Mucosa of descending colon (tissue), 3 donors: ENCODE measurements at regions of chr11 and their contacts with region 1.

Region 1: GRCh38 chr11:4636962-4637661 is at the start of gene OR51D1:
- DNase-seq: peak; percentile 54 to 77 (median 75)
- ATAC-seq: peak; percentile 95
- H3K4me3 ChIP-seq: no peak within 1 kb of the TSS
- H3K4me1 ChIP-seq: no peaks in the 10 kb centered on the region
- CTCF ChIP-seq: peak; percentile 77
- total RNA-seq, gene OR51D1: not detected

Region 2: DNA sequence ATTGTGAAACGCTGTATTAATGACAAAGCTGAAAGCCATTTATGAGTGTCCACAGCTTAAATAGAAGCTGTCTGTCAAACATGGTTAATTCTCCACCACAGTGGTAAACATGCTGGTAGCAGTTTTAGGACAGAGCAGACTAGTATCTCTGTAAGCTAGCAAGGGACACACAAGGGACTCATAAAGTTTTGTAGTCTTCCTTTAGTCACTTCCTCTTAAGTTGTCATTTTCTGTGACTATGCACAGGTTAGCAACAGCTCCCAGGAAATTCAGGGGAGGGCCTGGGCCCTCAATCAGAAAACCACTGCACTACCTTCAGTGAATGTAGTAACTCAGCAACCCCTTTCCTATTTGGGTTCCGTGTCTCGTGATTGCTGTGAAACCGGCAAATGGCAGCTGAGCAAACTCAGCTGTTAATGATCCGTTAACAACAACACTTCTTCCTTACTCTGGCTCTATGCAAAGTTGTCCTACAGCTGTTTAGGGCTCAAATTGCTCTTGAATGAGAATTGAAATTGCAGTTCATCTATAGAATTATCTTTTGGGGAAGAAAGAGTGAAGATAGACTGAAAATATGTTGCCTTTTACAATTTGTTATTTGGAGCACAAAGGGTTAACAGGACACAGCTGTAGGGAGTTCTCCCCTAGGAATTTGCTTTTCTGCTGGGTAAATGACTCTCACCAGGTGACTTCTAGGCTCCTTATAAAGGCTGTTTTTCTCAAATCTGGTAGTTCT is 67.1 kb after region 1 on chr11 and contains the start of gene MMP26:
- intact Hi-C with region 1: no loop called
- DNase-seq: peak in 1 of 3 donors; percentile 4
- ATAC-seq: peak; percentile 23
- H3K4me3 ChIP-seq: no peak within 1 kb of the TSS
- H3K4me1 ChIP-seq: no peaks in the 10 kb centered on the region
- CTCF ChIP-seq: no peak
- total RNA-seq, gene MMP26: not detected

Region 3: DNA sequence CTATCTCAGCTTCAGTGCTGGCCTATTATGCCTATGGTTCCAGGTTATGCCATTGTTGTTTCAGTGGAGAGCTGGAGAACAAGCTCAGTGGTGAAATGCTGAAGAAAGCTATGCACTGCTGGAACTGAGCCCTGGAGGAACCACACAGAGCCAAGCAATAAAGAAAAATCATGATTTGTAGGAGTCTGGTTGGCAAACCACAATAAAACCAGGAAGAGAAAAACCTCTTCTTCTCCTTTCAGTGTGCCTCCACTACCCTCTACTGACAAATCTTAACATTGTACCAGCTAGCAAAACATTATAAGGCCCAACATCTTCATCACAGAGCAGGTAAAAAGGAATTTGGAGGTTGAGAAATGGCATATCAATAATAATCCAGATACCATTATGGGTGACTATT is 189.3 kb after region 1 on chr11:
- intact Hi-C with region 1: loop called in 1 of 2 experiments (anchors 5 kb)
- DNase-seq: no peak
- ATAC-seq: peak; percentile 49
- H3K4me3 ChIP-seq: no peak overlapping the region
- H3K4me1 ChIP-seq: no peaks in the 10 kb centered on the region
- CTCF ChIP-seq: no peak

Region 4: GRCh38 chr11:4991060-4991459 is 353.9 kb after region 1 on chr11:
- intact Hi-C with region 1: loop called in 1 of 2 experiments (anchors 10 kb)
- DNase-seq: no peak
- ATAC-seq: no peak
- H3K4me3 ChIP-seq: no peak overlapping the region
- H3K4me1 ChIP-seq: no peaks in the 10 kb centered on the region
- CTCF ChIP-seq: no peak

Region 5: DNA sequence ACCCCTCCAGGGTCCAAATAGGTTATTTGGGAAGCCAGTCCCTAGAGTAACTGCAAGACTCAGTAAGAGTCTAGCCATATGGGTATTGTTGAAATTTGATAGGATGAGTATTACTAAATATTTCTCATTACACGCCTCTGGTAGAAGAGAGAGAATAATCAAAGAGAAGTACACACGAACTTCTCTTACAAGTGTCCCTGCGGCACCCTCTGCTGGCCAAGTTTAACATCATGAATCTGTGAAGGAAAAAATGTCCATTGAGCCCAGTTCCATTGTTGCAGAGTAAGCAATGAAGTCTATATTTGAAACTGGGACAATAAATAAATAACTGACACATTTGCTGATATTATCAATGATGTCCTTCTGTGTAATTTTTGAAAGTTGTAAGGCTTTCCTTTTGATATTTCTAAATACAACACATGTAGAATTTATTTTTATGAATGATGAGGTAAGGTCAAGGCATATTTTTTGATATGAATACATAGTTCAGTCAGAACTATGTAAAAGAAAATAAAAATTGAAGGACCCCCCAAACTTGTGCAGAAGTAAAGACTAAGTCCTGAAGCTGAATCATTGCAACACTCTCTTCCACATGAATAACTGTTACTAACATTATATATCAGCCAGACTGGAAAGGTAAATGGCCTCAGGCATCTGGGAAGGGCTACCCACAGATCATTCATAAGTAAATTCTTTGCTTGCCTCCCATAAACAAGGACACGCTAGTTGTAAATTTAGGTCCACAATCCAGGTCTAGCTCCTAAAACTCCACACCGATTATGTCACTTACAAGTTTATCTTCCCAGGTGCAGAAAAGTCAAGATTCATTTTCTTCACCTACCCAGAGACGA is 367.5 kb after region 1 on chr11:
- intact Hi-C with region 1: loop called (anchors 10 kb)
- DNase-seq: peak in 2 of 3 donors; percentile 33 to 76
- ATAC-seq: peak; percentile 40
- H3K4me3 ChIP-seq: no peak overlapping the region
- H3K4me1 ChIP-seq: no peaks in the 10 kb centered on the region
- CTCF ChIP-seq: no peak